Adrenal gland (tissue), 19 donors: ENCODE measurements at regions of chr1 and their contacts with region 1.

Region 1: GRCh38 chr1:169348383-169349036 is 19.1 kb downstream of the NME7 start:
- DNase-seq: peak in 3 of 7 donors; percentile 26 to 34 (median 34)
- H3K4me3 ChIP-seq: no peak overlapping the region
- H3K27ac ChIP-seq: no peak overlapping the region
- H3K4me1 ChIP-seq: peaks cover 0 to 6% of the 10 kb centered on the region in 2 donors
- H3K27me3 ChIP-seq: no peaks in the 10 kb centered on the region
- CTCF ChIP-seq: peak; percentile 74 to 90 (median 86)
- POLR2A ChIP-seq: no peak

Region 2: DNA sequence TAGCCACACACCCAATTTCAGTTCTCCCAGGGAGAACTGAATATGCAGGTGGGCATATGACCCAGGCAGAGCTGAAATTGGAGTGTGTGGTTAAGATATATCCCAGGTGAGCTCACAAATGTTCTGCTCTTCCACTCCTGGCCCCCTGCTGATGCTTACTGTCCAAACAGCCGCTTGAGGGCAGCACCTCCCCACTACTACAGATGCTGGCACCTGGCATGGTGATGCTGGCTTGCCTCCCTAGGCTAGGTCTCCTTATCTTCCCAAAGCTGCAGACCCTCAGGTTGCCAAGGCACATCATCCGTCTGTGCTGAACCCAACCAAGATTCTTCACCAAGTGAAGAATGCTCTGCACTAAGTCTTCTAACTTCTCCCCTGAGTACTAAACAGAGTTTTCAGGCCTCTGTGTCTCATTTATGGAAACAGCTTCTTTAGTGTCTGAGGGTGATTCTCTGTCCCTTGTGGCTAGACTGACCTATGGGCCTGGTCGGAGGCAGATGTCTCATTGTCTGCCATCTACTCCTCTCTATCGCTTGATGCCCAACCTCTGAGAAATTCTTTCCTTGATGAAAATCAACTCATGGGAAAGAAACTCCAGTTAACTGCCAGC is 744.9 kb before region 1 on chr1:
- intact Hi-C with region 1: loop called (anchors 5 to 10 kb)
- DNase-seq: peak; percentile 64 to 91 (median 79)
- H3K4me3 ChIP-seq: no peak overlapping the region
- H3K27ac ChIP-seq: no peak overlapping the region
- H3K4me1 ChIP-seq: no peaks in the 10 kb centered on the region
- H3K27me3 ChIP-seq: no peaks in the 10 kb centered on the region
- CTCF ChIP-seq: peak; percentile 65 to 89 (median 82)
- POLR2A ChIP-seq: no peak

Region 3: GRCh38 chr1:169106095-169106920 is 242.2 kb before region 1 on chr1 and contains the start of gene ATP1B1:
- intact Hi-C with region 1: loop called in 1 of 2 experiments (anchors 10 kb)
- DNase-seq: peak; percentile 87 to 95 (median 90)
- H3K4me3 ChIP-seq: peak within 1 kb of the TSS; percentile 54 to 98 (median 76)
- H3K27ac ChIP-seq: peak within 1 kb of the TSS; percentile 61 to 95 (median 88)
- H3K4me1 ChIP-seq: peaks cover 38 to 57% of the 10 kb centered on the region in 2 donors
- H3K27me3 ChIP-seq: no peaks in the 10 kb centered on the region
- CTCF ChIP-seq: peak in 5 of 6 experiments; percentile 46 to 94 (median 73)
- POLR2A ChIP-seq: peak; percentile 98 to 99
- total RNA-seq, gene ATP1B1: 51.4 to 187 (median 157) TPM

Region 4: DNA sequence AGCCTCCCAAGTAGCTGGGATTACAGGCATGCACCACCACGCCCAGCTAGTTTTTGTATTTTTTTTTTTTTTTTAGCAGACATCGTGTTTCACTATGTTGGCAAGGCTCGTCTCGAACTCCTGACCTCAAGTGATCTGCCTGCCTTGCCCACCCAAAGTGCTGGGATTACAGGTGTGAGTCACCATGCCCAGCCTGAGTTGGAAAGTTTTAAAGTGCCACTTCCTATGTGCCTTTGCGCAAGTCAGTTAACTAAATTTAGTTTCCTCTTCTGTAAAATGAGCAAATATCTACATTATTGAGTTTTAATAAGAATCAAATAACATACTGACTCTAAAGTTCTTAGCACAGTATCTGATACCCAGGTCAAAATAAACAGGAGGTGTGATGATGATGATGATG is 124.8 kb after region 1 on chr1:
- intact Hi-C with region 1: no loop called
- DNase-seq: no peak
- H3K4me3 ChIP-seq: no peak overlapping the region
- H3K27ac ChIP-seq: no peak overlapping the region
- H3K4me1 ChIP-seq: peaks cover 0 to 10% of the 10 kb centered on the region in 2 donors
- H3K27me3 ChIP-seq: no peaks in the 10 kb centered on the region
- CTCF ChIP-seq: no peak
- POLR2A ChIP-seq: no peak

Region 5: GRCh38 chr1:169546087-169546995 is 197.8 kb after region 1 on chr1:
- intact Hi-C with region 1: no loop called
- DNase-seq: peak; percentile 55 to 85 (median 70)
- H3K4me3 ChIP-seq: no peak overlapping the region
- H3K27ac ChIP-seq: no peak overlapping the region
- H3K4me1 ChIP-seq: no peaks in the 10 kb centered on the region
- H3K27me3 ChIP-seq: no peaks in the 10 kb centered on the region
- CTCF ChIP-seq: peak; percentile 74 to 93 (median 84)
- POLR2A ChIP-seq: no peak